ENCODE measurements at regions of chr15 and their contacts with region 1.

Region 1: GRCh38 chr15:92714477-92715401 is 59.2 kb upstream of the FAM174B start:
- DNase-seq: peak; percentile 76 to 87 (median 85)
- H3K4me3 ChIP-seq: peak overlapping the region; percentile 37 to 86 (median 72)
- H3K27ac ChIP-seq: no peak overlapping the region
- H3K4me1 ChIP-seq: peaks cover 0 to 9% (median 6%) of the 10 kb centered on the region in 4 experiments
- H3K27me3 ChIP-seq: no peaks in the 10 kb centered on the region

Region 2: DNA sequence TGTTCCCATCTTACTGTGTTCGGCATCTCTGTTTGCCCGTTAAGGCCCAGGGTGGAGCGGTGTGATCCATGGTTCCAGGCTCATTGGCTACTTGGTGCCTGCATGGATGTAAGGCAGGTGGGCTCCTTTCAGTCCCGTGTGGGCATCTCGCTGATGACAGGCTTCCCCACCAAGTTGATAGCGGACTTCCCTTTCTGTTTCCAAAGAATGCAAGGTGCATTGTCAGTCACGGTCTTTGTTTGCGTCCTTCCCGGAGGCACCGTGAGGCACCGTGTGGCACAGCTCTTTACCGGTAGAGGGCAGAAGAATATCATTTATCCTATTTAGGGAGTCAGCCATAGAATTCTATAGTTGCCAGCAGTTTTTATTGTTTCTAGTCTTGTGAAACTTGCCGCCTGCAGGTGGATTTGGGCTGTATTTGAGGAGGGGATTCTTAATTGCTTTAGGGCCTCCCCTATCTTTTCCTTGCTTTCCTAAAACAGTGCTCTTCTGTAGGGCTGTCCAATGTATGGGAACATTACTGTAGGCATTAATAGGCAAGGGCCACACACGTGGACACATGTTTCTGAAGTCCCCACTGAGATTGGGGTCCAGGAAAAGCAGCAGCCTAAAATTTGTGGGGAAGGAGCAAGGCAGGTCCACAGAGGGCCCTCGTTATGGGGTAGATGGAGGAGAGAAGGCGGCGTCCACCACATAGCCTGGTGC is 617.1 kb before region 1 on chr15:
- CTCF ChIA-PET with region 1: interaction called, 11 read pairs
- POLR2A ChIA-PET with region 1: no interaction called
- DNase-seq: peak; percentile 79 to 82 (median 81)
- H3K4me3 ChIP-seq: peak overlapping the region in 4 of 7 experiments; percentile 15 to 60 (median 29)
- H3K27ac ChIP-seq: no peak overlapping the region
- H3K4me1 ChIP-seq: peaks cover 20 to 68% (median 54%) of the 10 kb centered on the region in 4 experiments
- H3K27me3 ChIP-seq: no peaks in the 10 kb centered on the region

Region 3: DNA sequence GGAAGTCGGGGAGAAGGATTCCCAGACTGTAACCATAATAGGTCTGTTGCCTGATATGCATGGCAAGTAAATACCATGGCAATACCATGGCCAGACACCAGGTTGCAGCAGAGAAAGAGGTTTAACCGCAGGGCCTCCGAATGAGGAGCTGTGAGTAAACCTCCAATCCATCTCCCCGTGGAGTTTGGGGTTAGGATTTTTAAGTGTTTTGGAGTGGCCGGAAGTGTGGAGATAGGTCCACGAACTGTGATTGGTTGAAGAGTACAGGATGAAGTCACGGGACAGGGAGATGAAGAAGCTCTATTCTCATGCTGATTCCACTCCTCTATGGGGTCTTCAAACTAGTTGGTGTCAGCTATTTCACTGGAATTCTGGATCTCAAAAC is 193.1 kb before region 1 on chr15:
- CTCF ChIA-PET with region 1: interaction called, 20 read pairs
- POLR2A ChIA-PET with region 1: no interaction called
- DNase-seq: peak; percentile 76 to 83 (median 81)
- H3K4me3 ChIP-seq: no peak overlapping the region
- H3K27ac ChIP-seq: no peak overlapping the region
- H3K4me1 ChIP-seq: peaks cover 0 to 6% (median 4%) of the 10 kb centered on the region in 4 experiments
- H3K27me3 ChIP-seq: no peaks in the 10 kb centered on the region